Endothelial cell of umbilical vein (primary cell): ENCODE measurements at regions of chr11 and their contacts with region 1.

Region 1: GRCh38 chr11:66579017-66579606 is 10.7 kb upstream of the CTSF start:
- DNase-seq: peak; percentile 69
- H3K4me3 ChIP-seq: no peak overlapping the region
- H3K27ac ChIP-seq: no peak overlapping the region
- H3K4me1 ChIP-seq: no peaks in the 10 kb centered on the region
- H3K27me3 ChIP-seq: peaks cover 0 to 2% of the 10 kb centered on the region in 2 experiments
- CTCF ChIP-seq: peak; percentile 76 to 88
- POLR2A ChIP-seq: no peak

Region 2: DNA sequence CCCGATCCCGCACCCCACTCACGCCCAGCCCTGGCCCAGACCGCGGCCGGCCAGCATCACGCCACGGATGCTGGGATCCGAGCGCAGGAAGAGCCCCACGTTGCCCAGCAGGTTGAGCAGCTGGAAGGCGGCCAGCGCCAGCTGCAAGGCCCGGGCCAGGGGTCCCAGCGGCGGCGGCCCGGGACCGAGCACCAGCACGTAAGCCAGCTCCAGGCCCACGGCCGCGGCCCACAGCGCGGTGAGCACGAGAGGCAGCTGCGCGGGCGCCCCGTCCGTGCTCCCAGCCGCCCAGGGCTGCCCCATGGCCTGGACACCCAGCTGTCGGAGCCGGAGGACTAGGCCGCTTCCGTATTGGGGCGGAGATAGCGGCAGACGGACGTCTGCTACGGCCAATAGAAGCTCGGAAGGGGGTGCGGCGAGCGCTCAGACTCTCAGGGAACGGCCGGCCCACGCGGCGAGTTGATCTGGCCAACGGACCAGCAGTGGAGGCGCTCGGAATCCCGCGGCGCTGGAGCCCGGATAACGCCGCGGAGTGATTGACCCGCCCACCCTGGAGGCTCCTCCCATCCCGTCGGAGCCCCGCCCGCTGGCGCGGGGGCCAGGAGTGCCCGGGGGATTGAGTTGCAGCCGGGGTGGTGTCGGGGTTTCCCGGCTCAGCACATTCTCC is 33.3 kb before region 1 on chr11 and contains the start of gene ZDHHC24:
- CTCF ChIA-PET with region 1: no interaction called
- POLR2A ChIA-PET with region 1: no interaction called
- dilution Hi-C with region 1: no loop called
- intact Hi-C with region 1: no loop called
- DNase-seq: peak; percentile 99
- H3K4me3 ChIP-seq: peak within 1 kb of the TSS; percentile 70 to 81 (median 78)
- H3K27ac ChIP-seq: peak within 1 kb of the TSS; percentile 62
- H3K4me1 ChIP-seq: peaks cover 33% of the 10 kb centered on the region
- H3K27me3 ChIP-seq: no peaks in the 10 kb centered on the region
- CTCF ChIP-seq: no peak
- POLR2A ChIP-seq: peak; percentile 90
- total RNA-seq, gene ZDHHC24: 18.3 and 20.1 TPM in 2 replicates

Region 3: DNA sequence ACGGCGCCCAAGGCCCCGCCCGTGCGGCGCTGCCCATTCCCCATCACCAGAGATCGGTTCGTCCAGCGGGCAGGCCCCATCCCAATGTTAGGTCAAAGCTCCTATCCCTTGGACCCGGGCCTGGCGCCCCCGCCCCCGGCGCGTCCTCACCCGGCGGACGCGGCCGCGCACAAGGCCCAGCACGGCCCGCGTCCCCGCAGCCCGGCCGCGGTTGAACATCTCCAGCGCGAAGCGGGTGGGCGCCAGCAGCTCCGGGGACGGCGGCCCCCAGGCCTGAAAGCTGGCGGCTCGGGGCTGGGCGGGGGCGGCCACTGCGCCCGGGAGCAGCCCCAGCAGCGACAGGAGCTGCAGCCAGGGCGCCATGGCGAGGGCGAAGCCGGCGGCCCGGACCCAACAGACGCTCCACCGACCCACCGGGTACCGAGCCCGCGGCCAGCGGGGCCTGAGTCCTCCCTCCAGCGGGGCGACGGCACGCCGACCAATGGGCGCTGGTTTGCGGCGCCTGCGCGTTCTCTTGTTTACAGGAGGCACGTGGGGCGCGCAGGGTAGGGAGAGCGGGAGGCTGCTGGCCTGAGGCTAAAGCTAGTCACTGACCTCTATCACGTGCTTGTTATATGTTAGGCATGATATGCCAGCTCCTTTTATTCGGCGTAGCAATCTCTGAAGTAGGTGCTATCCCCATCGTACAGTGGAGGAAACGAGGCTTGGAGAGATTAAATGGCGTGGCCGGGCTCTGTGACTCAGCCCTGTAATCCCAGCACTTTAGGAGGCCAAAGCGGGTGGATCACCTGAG is 10.8 kb before region 1 on chr11 and contains the start of gene CTSF:
- CTCF ChIA-PET with region 1: interaction called, 11 read pairs
- POLR2A ChIA-PET with region 1: no interaction called
- dilution Hi-C with region 1: no loop called
- intact Hi-C with region 1: no loop called
- DNase-seq: peak; percentile 85
- H3K4me3 ChIP-seq: peak within 1 kb of the TSS in 1 of 3 experiments; percentile 44
- H3K27ac ChIP-seq: no peak within 1 kb of the TSS
- H3K4me1 ChIP-seq: peaks cover 3% of the 10 kb centered on the region
- H3K27me3 ChIP-seq: no peaks in the 10 kb centered on the region
- CTCF ChIP-seq: no peak
- POLR2A ChIP-seq: no peak
- total RNA-seq, gene CTSF: 11.0 and 14.4 TPM in 2 replicates

Region 4: GRCh38 chr11:66701432-66702240 is 122.5 kb after region 1 on chr11:
- CTCF ChIA-PET with region 1: no interaction called
- POLR2A ChIA-PET with region 1: no interaction called
- dilution Hi-C with region 1: no loop called
- intact Hi-C with region 1: no loop called
- DNase-seq: no peak
- H3K4me3 ChIP-seq: no peak overlapping the region
- H3K27ac ChIP-seq: no peak overlapping the region
- H3K4me1 ChIP-seq: no peaks in the 10 kb centered on the region
- H3K27me3 ChIP-seq: no peaks in the 10 kb centered on the region
- CTCF ChIP-seq: no peak
- POLR2A ChIP-seq: no peak

Region 5: DNA sequence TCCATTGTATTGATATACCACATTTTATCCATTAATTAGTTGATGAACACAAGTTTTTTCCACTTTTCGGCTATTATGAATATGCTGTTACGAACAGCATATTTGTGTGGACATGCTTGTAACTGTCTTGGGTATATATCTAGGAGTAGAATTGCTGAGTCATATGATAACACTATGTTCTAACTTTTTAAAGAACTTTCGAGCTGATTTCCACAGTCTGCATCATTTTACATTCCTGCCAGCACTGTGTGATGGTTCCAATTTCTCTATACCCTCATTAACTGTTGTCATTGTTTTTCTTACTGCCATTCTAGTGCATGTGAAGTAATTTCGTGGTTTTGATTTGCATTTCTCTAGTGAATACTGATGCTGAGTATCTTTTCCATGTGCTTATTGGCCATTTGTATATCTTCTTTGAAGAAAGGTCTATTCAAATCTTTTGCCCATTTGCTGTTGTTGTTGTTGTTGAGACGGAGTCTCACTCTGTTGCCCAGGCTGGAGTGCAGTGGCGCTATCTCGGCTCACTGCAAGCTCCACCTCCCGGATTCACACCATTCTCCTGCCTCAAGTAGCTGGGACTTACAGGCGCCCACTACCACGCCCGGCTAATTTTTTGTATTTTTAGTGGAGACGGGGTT is 256.8 kb after region 1 on chr11:
- CTCF ChIA-PET with region 1: interaction called, 3 read pairs
- POLR2A ChIA-PET with region 1: no interaction called
- dilution Hi-C with region 1: no loop called
- intact Hi-C with region 1: loop called (anchors 1 kb)
- DNase-seq: no peak
- H3K4me3 ChIP-seq: no peak overlapping the region
- H3K27ac ChIP-seq: no peak overlapping the region
- H3K4me1 ChIP-seq: peaks cover 4% of the 10 kb centered on the region
- H3K27me3 ChIP-seq: no peaks in the 10 kb centered on the region
- CTCF ChIP-seq: no peak
- POLR2A ChIP-seq: no peak